ENCODE measurements at regions of chr15 and their contacts with region 1.

Region 1: DNA sequence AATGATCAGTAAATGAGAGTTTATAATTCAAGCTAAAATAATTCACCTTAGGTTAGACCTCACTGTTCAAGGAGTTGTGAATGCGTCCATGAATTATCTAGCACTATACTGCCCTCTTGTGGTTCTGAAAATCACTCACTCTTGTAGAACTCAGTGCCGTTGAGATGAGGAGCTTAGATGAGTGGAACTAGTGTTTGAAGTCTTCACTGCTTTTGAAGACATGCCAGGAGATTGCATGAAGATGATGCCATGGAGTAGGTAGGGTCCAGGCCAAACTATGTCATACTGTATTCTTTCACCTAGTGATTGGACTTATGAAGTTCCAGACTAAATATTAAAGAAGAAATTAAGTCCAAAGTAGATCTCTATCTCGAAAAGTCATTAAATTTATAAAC is 28.8 kb downstream of the LYSMD4 start:
- DNase-seq: peak; percentile 86
- H3K4me3 ChIP-seq: no peak overlapping the region
- CTCF ChIP-seq: peak; percentile 65

Region 2: GRCh38 chr15:99275525-99276128 is 428.8 kb before region 1 on chr15:
- in situ Hi-C with region 1: loop called (anchors 25 kb)
- DNase-seq: no peak
- H3K4me3 ChIP-seq: no peak overlapping the region
- CTCF ChIP-seq: no peak

Region 3: DNA sequence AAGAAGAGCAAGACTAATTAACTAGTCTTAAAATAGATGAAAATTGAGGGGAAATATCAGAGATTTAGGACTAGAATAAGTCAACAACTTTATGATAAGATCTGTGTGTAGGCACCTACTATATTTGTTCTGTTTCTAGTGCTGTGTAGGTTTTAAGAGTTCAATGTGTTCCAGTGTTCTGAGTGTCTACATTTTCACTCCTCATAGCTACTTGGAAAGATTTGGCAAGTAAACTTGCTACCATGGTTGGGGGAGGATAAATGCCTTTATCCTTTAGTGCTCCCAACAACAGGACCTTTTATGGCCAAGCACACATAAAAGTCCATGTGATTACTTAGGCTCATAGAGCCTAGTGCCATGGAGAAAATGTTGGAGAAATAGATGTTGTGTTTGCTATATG is 35.2 kb before region 1 on chr15:
- in situ Hi-C with region 1: no loop called
- DNase-seq: no peak
- H3K4me3 ChIP-seq: no peak overlapping the region
- CTCF ChIP-seq: no peak